ENCODE measurements at regions of chr1 and their contacts with region 1.

Region 1: DNA sequence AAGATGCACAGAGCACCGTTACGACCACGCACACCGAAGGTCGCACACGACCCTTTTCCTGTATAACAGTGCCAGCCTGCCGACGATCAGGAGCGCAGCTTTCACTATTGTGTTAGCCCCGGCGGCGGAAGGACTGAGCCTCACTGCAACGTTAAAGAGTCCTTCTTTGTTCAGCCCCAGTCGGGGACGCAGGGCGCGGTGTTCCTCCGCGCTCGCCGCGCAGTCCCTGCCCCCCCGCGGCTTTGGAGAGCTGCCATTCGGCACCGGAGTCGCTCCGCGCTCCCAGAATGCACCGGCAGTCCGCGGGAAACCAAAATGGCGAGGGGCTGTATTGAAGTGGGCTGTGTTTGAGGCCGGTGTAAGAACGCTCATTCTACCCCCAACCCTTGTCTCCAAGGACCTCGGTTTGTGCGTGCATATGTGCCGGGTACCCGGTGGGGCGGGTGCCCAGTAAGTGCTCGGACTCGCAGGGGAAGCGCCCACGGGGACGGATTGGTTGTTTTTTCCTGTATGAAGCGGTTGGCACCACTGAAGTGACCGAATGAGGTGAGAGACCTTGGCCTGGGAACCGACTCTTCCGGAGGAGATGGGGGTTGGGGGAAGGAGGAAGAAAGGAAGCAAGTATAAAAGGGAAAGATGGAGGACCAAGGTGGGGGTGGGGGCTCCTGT is at the start of gene MTF2:
- DNase-seq: peak; percentile 95
- H3K4me3 Mint-ChIP-seq: peak within 1 kb of the TSS; percentile 100
- H3K27ac Mint-ChIP-seq: peak within 1 kb of the TSS; percentile 94
- H3K4me1 Mint-ChIP-seq: peaks cover 42% of the 10 kb centered on the region
- H3K27me3 Mint-ChIP-seq: no peaks in the 10 kb centered on the region
- total RNA-seq, gene MTF2: 55.5 to 56.6 TPM

Region 2: GRCh38 chr1:92831762-92832536 is 247.2 kb before region 1 on chr1 and contains the start of gene RPL5:
- CTCF ChIA-PET with region 1: interaction called, 5 read pairs
- POLR2A ChIA-PET with region 1: interaction called, 18 read pairs
- DNase-seq: peak; percentile 97
- H3K4me3 Mint-ChIP-seq: peak within 1 kb of the TSS; percentile 92
- H3K27ac Mint-ChIP-seq: peak within 1 kb of the TSS; percentile 84
- H3K4me1 Mint-ChIP-seq: peaks cover 50% of the 10 kb centered on the region
- H3K27me3 Mint-ChIP-seq: no peaks in the 10 kb centered on the region
- total RNA-seq, gene RPL5: 660 to 678 TPM

Region 3: GRCh38 chr1:93021539-93022134 is 57.5 kb before region 1 on chr1:
- CTCF ChIA-PET with region 1: interaction called, 10 read pairs
- POLR2A ChIA-PET with region 1: interaction called, 4 read pairs
- DNase-seq: no peak
- H3K4me3 Mint-ChIP-seq: no peak overlapping the region
- H3K27ac Mint-ChIP-seq: no peak overlapping the region
- H3K4me1 Mint-ChIP-seq: peaks cover 6% of the 10 kb centered on the region
- H3K27me3 Mint-ChIP-seq: peaks cover 29% of the 10 kb centered on the region

Region 4: GRCh38 chr1:93061895-93062792 is 17.0 kb before region 1 on chr1:
- CTCF ChIA-PET with region 1: interaction called, 13 read pairs
- POLR2A ChIA-PET with region 1: interaction called, 23 read pairs
- DNase-seq: peak; percentile 51
- H3K4me3 Mint-ChIP-seq: no peak overlapping the region
- H3K27ac Mint-ChIP-seq: no peak overlapping the region
- H3K4me1 Mint-ChIP-seq: no peaks in the 10 kb centered on the region
- H3K27me3 Mint-ChIP-seq: peaks cover 29% of the 10 kb centered on the region

Region 5: GRCh38 chr1:93107395-93107794 is 28.3 kb after region 1 on chr1:
- CTCF ChIA-PET with region 1: no interaction called
- POLR2A ChIA-PET with region 1: no interaction called
- DNase-seq: no peak
- H3K4me3 Mint-ChIP-seq: no peak overlapping the region
- H3K27ac Mint-ChIP-seq: no peak overlapping the region
- H3K4me1 Mint-ChIP-seq: peaks cover 11% of the 10 kb centered on the region
- H3K27me3 Mint-ChIP-seq: no peaks in the 10 kb centered on the region

Region 6: DNA sequence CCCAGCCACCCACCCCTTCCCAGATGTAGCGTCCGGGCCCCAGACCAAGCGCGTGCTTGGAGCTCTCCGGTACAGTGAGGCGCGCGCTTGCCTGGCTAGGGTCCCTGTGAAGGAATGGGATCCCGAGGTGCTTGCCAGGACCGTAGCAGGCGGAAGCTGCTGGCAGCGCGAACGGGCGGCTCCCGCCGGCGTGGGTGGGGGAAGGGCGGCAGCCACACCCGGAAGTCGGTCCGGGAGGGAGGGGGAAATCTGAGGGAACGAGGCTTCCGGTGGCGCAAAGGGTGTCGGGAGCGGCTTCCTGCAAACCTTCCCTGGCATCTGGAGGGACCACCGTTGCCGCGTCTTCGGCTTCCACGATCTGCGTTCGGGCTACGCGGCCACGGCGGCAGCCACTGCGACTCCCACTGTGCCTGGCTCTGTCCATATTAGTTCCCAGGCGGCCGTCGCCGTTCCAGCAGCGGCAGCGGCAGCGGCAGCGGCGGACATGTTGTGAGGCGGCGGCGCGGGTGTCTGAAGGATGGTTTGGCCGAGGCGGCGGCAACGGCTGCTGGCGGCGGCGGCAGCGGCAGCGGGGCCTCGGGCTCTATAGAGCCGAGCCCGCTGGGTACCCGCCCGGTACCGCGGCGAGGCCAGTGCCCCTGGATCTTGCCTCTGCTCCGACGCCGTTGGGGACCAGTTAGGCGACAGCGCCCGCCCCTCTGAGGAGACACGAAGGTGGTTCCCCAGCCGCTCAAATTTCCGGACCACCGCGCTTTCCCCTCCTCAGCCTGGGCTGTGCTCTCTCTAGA is 266.7 kb after region 1 on chr1 and contains the start of gene DR1:
- CTCF ChIA-PET with region 1: interaction called, 12 read pairs
- POLR2A ChIA-PET with region 1: interaction called, 51 read pairs
- DNase-seq: peak; percentile 92
- H3K4me3 Mint-ChIP-seq: peak within 1 kb of the TSS; percentile 99
- H3K27ac Mint-ChIP-seq: peak within 1 kb of the TSS; percentile 97
- H3K4me1 Mint-ChIP-seq: peaks cover 26% of the 10 kb centered on the region
- H3K27me3 Mint-ChIP-seq: no peaks in the 10 kb centered on the region
- total RNA-seq, gene DR1: 100 to 104 TPM

Measured in activated CD4-positive, alpha-beta memory T cell treated with anti-CD3 and anti-CD28 coated beads, Interleukin-2, amount 10 ng/mL, durations not matched to agents 7 days and 5 days (primary cell).